Activated CD4-positive, alpha-beta T cell treated with anti-CD3 and anti-CD28 coated beads for 36 hours (primary cell): ENCODE measurements at regions of chr7 and their contacts with region 1.

Region 1: GRCh38 chr7:140121326-140121725 is 55.5 kb downstream of the KDM7A start:
- DNase-seq: no peak
- ATAC-seq: no peak
- H3K4me3 Mint-ChIP-seq: no peak overlapping the region
- H3K27ac Mint-ChIP-seq: no peak overlapping the region
- H3K4me1 Mint-ChIP-seq: peaks cover 13% of the 10 kb centered on the region
- H3K27me3 Mint-ChIP-seq: no peaks in the 10 kb centered on the region

Region 2: DNA sequence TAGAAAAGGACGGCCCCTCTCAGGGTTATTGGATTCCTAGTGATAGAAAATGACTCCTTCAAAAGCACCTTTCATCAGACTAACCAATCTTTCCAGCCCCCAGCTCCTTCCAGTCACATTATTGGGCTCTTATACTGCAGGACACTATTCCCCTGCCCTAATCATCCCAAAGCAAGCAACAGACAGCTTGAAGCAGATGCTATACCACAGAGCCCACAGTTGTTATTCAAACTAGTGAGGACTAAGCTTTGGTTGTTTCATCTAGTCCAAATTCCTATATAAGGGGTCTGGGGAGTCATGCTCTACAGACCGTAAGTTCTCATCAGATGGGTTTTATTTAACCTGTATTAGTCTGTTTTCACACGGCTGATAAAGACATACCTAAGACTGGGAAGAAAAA is 1110.0 kb before region 1 on chr7:
- CTCF ChIA-PET with region 1: no interaction called
- POLR2A ChIA-PET with region 1: interaction called, 10 read pairs
- intact Hi-C with region 1: no loop called
- DNase-seq: no peak
- ATAC-seq: no peak
- H3K4me3 Mint-ChIP-seq: no peak overlapping the region
- H3K27ac Mint-ChIP-seq: no peak overlapping the region
- H3K4me1 Mint-ChIP-seq: no peaks in the 10 kb centered on the region
- H3K27me3 Mint-ChIP-seq: peaks cover 4% of the 10 kb centered on the region

Region 3: DNA sequence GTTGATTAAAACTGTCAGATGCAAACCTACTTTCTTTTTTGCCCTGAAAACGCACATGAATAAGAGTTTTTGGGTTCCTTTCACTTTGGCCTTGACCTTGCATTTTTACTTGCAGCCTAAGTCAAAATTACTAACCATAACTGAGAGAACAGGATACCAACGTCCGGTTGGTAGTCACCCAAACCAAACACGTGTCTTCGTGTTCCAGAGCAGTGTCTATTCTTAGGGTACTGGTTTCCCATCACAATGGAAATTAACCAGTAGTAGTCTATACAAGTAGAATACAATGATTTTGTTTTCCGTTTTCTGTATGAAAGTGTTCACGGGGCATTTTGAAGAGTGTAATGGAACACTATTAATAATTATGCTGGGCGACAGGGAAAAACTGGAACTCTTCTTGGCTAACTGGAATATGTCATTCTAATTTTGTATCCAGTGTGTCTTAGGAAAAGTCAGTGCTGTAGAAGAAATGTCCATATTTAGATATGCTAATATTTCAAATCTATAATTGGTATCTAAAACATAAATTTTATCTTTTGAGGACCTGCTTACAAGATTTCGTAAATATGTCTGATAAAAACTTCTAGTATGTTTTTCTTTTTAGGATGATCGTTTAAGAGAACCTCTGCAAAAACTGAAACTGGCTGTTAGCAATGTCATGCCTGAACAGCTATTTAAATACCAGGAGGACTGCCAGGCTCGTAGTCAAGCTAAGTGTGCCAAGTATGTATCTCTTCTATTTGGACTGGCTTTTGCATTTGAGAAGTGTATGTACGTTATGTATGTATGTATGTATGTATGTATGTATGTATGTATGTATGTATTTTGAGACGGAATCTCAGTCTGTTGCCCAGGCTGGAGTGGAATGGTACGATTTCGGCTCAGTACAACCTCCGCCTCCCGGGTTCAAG is 849.4 kb before region 1 on chr7:
- CTCF ChIA-PET with region 1: no interaction called
- POLR2A ChIA-PET with region 1: no interaction called
- intact Hi-C with region 1: no loop called
- DNase-seq: no peak
- ATAC-seq: no peak
- H3K4me3 Mint-ChIP-seq: no peak overlapping the region
- H3K27ac Mint-ChIP-seq: no peak overlapping the region
- H3K4me1 Mint-ChIP-seq: no peaks in the 10 kb centered on the region
- H3K27me3 Mint-ChIP-seq: no peaks in the 10 kb centered on the region